CD4-positive, alpha-beta T cell (primary cell): ENCODE measurements at regions of chr18 and their contacts with region 1.

Region 1: GRCh38 chr18:58768293-58768974 is 96.2 kb upstream of the ZNF532 start:
- DNase-seq: peak; percentile 54 to 81 (median 62)
- ATAC-seq: peak; percentile 81
- H3K4me3 ChIP-seq: peak overlapping the region; percentile 14
- H3K4me3 Mint-ChIP-seq: no peak overlapping the region
- H3K27ac ChIP-seq: no peak overlapping the region
- H3K27ac Mint-ChIP-seq: no peak overlapping the region
- H3K4me1 ChIP-seq: peaks cover 17% of the 10 kb centered on the region
- H3K4me1 Mint-ChIP-seq: peaks cover 15% of the 10 kb centered on the region
- H3K27me3 ChIP-seq: peaks cover 14 to 36% of the 10 kb centered on the region in 2 experiments
- H3K27me3 Mint-ChIP-seq: peaks cover 72% of the 10 kb centered on the region
- CTCF ChIP-seq: peak; percentile 67

Region 2: GRCh38 chr18:58180738-58181353 is 587.6 kb before region 1 on chr18:
- CTCF ChIA-PET with region 1: no interaction called
- POLR2A ChIA-PET with region 1: no interaction called
- intact Hi-C with region 1: loop called (anchors 10 kb)
- DNase-seq: peak; percentile 33 to 77 (median 54)
- ATAC-seq: peak; percentile 51
- H3K4me3 ChIP-seq: no peak overlapping the region
- H3K4me3 Mint-ChIP-seq: no peak overlapping the region
- H3K27ac ChIP-seq: no peak overlapping the region
- H3K27ac Mint-ChIP-seq: no peak overlapping the region
- H3K4me1 ChIP-seq: no peaks in the 10 kb centered on the region
- H3K4me1 Mint-ChIP-seq: no peaks in the 10 kb centered on the region
- H3K27me3 ChIP-seq: no peaks in the 10 kb centered on the region
- H3K27me3 Mint-ChIP-seq: peaks cover 6% of the 10 kb centered on the region
- CTCF ChIP-seq: peak; percentile 85

Region 3: DNA sequence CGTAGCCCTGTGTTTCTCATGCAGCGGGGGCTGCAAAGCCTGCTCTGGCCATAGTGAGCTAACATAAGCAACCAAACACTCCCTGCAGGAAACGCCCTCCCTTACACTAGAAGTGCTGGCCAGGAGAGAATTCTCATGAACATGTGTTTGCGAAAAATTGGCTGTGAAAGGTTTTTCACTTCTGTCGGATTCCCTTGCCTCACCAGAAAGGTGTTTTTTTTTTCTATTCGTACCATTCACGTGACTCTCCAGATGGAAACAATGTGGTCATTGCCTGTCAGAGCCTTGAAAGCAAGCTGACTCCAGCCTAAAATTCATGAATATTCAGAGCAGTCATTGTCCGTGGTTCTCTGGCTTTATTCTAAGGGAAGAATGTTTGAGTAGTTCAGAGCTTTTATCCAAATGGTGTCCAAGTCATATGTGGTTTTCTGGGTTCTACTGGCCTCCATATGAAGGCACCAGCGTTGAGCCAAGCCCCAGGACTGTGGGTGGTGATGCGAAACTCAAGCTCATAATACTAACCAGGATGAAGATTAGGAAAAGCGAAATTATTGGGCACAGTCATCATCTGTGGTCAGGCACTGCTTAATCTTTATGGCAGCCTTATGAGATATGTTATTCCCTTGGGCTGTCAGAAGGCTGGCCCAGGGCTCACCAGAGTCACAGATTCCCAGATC is 376.0 kb before region 1 on chr18:
- CTCF ChIA-PET with region 1: no interaction called
- POLR2A ChIA-PET with region 1: no interaction called
- intact Hi-C with region 1: loop called in 1 of 2 experiments (anchors 10 kb)
- DNase-seq: no peak
- ATAC-seq: no peak
- H3K4me3 ChIP-seq: no peak overlapping the region
- H3K4me3 Mint-ChIP-seq: no peak overlapping the region
- H3K27ac ChIP-seq: no peak overlapping the region
- H3K27ac Mint-ChIP-seq: no peak overlapping the region
- H3K4me1 ChIP-seq: peaks cover 8% of the 10 kb centered on the region
- H3K4me1 Mint-ChIP-seq: peaks cover 11% of the 10 kb centered on the region
- H3K27me3 ChIP-seq: no peaks in the 10 kb centered on the region
- H3K27me3 Mint-ChIP-seq: no peaks in the 10 kb centered on the region
- CTCF ChIP-seq: no peak

Region 4: DNA sequence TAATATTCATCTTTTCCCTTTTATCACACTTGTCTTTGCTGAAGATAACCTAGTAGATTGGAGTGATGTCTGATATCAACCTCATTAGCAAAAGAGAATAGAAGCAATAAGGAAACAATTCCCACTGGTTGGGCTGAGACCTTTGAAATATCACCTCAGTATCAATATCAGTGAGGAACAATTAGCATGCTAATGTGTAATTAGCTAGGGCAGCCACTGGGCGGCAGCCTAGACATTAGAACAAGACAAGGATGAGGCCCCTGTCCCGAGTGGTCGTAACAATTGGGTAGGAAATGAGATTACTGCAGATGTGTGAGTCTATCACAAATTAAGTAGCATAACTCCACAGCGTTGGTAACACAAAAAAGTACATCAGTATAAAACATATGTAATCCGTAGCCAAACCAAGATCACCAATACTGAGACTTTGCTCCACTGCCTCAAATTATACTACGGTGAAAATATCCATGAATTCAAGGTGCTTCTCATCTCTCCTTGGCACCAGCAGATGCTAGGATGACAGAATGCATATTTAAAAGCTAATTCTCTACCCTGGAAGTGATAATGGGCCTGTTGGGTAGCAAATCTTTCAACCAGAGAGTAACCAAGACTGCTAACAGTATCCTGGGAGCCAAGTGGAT is 238.6 kb before region 1 on chr18:
- CTCF ChIA-PET with region 1: interaction called, 75 read pairs
- POLR2A ChIA-PET with region 1: interaction called, 19 read pairs
- intact Hi-C with region 1: loop called (anchors 1 kb)
- DNase-seq: peak; percentile 48 to 78 (median 66)
- ATAC-seq: peak; percentile 88
- H3K4me3 ChIP-seq: no peak overlapping the region
- H3K4me3 Mint-ChIP-seq: no peak overlapping the region
- H3K27ac ChIP-seq: no peak overlapping the region
- H3K27ac Mint-ChIP-seq: no peak overlapping the region
- H3K4me1 ChIP-seq: peaks cover 4% of the 10 kb centered on the region
- H3K4me1 Mint-ChIP-seq: peaks cover 5% of the 10 kb centered on the region
- H3K27me3 ChIP-seq: no peaks in the 10 kb centered on the region
- H3K27me3 Mint-ChIP-seq: no peaks in the 10 kb centered on the region
- CTCF ChIP-seq: peak; percentile 96

Region 5: DNA sequence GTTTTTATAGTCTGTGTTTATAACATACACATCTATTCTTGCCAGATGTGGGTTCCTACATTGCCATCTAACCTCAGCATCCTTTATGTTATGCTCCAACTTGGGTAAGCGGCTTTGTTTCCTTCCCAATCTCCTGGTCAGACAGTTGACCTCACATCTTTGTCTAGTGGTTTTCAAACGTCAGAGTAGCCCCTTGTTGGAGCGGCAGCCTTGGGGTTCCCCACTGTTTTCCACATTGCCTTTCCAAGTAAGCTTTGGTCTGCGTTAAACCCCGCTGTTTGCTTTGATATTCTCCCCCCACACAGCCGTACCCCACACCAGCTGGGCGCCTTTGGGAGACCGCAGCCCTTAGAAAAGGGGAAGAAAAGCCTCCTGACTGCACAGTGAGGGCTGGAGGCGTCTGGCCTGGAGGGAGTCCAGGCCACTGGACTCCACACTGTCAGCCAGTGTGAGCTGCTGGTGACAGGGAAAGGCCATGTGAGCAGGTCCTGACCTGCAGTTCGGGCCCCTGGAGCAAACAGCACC is 13.8 kb before region 1 on chr18:
- CTCF ChIA-PET with region 1: interaction called, 17 read pairs
- POLR2A ChIA-PET with region 1: interaction called, 10 read pairs
- intact Hi-C with region 1: no loop called
- DNase-seq: peak in 2 of 14 experiments; percentile 21 to 22
- ATAC-seq: peak; percentile 37
- H3K4me3 ChIP-seq: no peak overlapping the region
- H3K4me3 Mint-ChIP-seq: no peak overlapping the region
- H3K27ac ChIP-seq: no peak overlapping the region
- H3K27ac Mint-ChIP-seq: peak overlapping the region; percentile 72
- H3K4me1 ChIP-seq: peaks cover 19% of the 10 kb centered on the region
- H3K4me1 Mint-ChIP-seq: peaks cover 50% of the 10 kb centered on the region
- H3K27me3 ChIP-seq: no peaks in the 10 kb centered on the region
- H3K27me3 Mint-ChIP-seq: no peaks in the 10 kb centered on the region
- CTCF ChIP-seq: no peak

Region 6: GRCh38 chr18:59070181-59070912 is 301.9 kb after region 1 on chr18:
- CTCF ChIA-PET with region 1: interaction called, 21 read pairs
- POLR2A ChIA-PET with region 1: interaction called, 7 read pairs
- intact Hi-C with region 1: loop called (anchors 1 kb)
- DNase-seq: peak; percentile 64 to 82 (median 74)
- ATAC-seq: peak; percentile 76
- H3K4me3 ChIP-seq: no peak overlapping the region
- H3K4me3 Mint-ChIP-seq: no peak overlapping the region
- H3K27ac ChIP-seq: no peak overlapping the region
- H3K27ac Mint-ChIP-seq: no peak overlapping the region
- H3K4me1 ChIP-seq: peaks cover 3% of the 10 kb centered on the region
- H3K4me1 Mint-ChIP-seq: no peaks in the 10 kb centered on the region
- H3K27me3 ChIP-seq: peaks cover 0 to 4% of the 10 kb centered on the region in 2 experiments
- H3K27me3 Mint-ChIP-seq: no peaks in the 10 kb centered on the region
- CTCF ChIP-seq: peak; percentile 84